ENCODE measurements at regions of chr20 and their contacts with region 1.

Region 1: DNA sequence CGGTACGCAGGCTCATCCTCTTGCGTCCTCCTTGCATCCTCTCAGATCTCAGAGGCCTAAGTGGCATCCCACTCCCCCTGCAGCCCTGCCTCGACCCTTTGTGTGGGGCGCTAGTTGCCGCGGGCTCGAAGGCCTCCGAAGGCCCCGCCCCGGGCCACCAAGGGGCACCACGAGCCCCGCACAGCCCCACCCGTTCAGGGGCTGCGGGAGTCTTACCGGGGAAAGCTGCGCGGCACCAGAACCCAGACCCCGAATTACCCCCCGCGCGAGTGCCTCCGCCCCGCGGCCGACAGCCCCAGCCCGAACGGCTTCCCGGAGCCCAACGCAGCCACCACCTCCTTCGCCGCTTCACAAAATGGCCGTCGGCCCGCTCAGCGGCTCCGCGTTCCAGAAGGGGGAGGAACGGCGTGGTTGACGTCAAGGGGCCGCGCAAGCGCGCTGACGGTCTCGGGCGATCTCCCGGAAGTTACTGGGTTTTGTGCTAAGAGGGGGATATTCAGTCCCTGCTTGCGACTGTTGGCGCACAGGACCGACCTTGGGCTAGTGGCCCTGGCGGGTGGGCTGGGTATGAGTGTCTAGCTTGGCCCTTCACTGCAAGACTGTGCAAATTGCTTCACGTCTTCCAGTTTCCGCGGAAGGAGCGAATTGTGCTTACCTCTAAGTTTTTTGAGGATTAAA is at the starts of genes CPNE1 and RBM12:
- DNase-seq: peak; percentile 97
- H3K4me3 Mint-ChIP-seq: peak within 1 kb of the TSS; percentile 98
- H3K27ac Mint-ChIP-seq: peak within 1 kb of the TSS; percentile 99
- H3K4me1 Mint-ChIP-seq: peaks cover 43% of the 10 kb centered on the region
- H3K27me3 Mint-ChIP-seq: no peaks in the 10 kb centered on the region
- CTCF ChIP-seq: no peak
- total RNA-seq, gene CPNE1: 458 and 505 TPM in 2 replicates
- total RNA-seq, gene RBM12: 125 and 133 TPM in 2 replicates

Region 2: DNA sequence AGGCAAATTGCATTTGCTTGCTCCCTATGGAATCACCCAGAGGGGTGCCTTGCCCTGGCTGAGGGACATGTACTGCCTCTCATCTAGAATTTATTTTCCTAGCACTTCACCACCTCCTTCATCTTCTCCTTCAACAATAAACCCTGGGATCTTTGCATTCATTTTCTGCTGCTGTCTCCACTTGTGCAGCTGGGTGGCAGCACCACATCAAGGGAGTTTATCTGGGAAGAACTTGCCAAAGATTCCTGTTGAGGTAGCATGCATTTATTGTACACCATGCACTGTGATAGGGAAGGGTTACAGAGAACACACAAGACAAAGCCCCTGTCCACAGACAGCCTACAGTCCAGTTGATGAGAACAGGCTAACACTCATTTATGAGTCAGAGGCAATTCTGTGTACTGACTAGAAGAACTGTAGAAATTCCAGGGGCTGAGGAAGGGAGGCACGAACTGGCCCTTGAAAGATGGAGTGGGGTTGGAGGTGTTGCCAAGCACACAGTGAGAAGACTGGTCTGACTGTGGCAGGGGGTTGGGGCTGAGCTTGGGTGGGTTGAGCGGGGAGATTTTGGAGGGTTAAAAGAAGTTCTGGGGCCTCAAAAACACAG is 152.8 kb before region 1 on chr20:
- CTCF ChIA-PET with region 1: no interaction called
- intact Hi-C with region 1: loop called (anchors 10 kb)
- DNase-seq: peak; percentile 63
- H3K4me3 Mint-ChIP-seq: no peak overlapping the region
- H3K27ac Mint-ChIP-seq: no peak overlapping the region
- H3K4me1 Mint-ChIP-seq: peaks cover 13% of the 10 kb centered on the region
- H3K27me3 Mint-ChIP-seq: no peaks in the 10 kb centered on the region
- CTCF ChIP-seq: peak; percentile 62

Region 3: GRCh38 chr20:35568645-35569262 is 95.9 kb before region 1 on chr20:
- CTCF ChIA-PET with region 1: interaction called, 4 read pairs
- intact Hi-C with region 1: loop called (anchors 2 kb)
- DNase-seq: peak; percentile 62
- H3K4me3 Mint-ChIP-seq: no peak overlapping the region
- H3K27ac Mint-ChIP-seq: no peak overlapping the region
- H3K4me1 Mint-ChIP-seq: peaks cover 8% of the 10 kb centered on the region
- H3K27me3 Mint-ChIP-seq: no peaks in the 10 kb centered on the region
- CTCF ChIP-seq: peak; percentile 74